A549 (cell line): ENCODE measurements at regions of chr15 and their contacts with region 1.

Region 1: DNA sequence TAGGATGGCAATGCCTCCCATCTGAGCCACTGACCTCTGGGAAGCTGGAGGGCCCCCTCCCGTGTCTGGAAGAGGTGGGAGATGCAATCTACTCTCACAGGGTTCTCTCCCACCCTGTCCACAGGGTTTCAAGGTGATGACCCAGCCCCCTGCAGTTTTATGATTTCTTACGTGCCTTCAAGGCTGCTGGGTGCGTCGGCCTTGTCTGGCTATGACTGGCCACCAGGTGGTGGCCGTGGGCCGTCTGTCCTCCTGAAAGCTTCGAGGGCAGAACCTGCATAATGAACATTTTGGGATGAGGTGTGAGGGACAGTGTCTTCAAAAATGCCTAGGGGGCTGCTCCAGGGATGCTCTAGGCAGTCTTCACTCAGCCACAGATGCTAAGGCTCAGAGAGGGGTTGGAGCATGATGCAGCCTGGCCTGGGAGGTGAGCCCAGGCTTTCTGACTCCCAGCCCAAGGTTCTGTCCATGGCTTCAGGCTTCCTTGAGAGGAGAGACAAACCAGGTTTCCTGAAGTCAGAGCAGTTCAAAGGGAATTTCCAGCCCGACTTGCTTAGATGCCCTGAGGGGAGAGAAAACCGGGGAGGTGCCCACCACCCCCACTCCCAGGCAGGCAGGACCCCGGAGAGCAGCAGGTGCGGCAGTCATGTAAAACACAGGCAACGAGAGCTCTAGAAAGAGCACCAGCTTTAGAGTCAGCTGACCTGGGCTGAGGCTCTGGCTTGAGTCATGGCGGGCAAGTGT is 18.7 kb downstream of the ISG20 start:
- DNase-seq: peak; percentile 62 to 78
- ATAC-seq: peak; percentile 75 to 88
- H3K4me3 ChIP-seq: no peak overlapping the region
- H3K27ac ChIP-seq: no peak overlapping the region
- H3K4me1 ChIP-seq: no peaks in the 10 kb centered on the region
- CTCF ChIP-seq: peak; percentile 93
- EP300 ChIP-seq: no peak
- POLR2A ChIP-seq: no peak
- RAD21 ChIP-seq: peak; percentile 94 to 97

Region 2: DNA sequence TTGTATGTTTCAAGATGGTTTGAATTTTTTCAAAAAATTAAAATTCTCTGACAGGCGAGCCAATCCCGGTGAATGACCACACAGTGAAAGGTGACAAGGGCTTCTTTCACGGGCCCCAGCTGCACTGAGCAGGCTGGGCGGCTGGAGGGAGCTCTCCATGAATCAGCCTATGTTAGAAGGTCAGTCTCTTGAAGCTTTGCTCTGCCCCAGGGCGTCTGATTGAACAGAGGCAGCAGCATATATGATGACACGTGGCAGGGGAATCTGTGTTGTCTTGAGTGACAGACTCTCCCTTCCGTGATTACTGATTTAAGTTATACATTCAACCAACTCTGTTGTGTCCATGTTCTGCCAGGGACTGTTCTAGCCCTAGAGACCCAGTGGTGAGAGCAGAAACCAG is 32.8 kb after region 1 on chr15:
- CTCF ChIA-PET with region 1: interaction called, 21 read pairs
- POLR2A ChIA-PET with region 1: no interaction called
- DNase-seq: no peak
- ATAC-seq: peak in 1 of 2 experiments; percentile 46; a peak in 3 of 6 replicates
- H3K4me3 ChIP-seq: no peak overlapping the region
- H3K27ac ChIP-seq: no peak overlapping the region
- H3K4me1 ChIP-seq: no peaks in the 10 kb centered on the region
- CTCF ChIP-seq: no peak
- EP300 ChIP-seq: no peak
- POLR2A ChIP-seq: no peak
- RAD21 ChIP-seq: no peak

Region 3: GRCh38 chr15:88756921-88757320 is 99.4 kb after region 1 on chr15:
- CTCF ChIA-PET with region 1: interaction called, 10 read pairs
- POLR2A ChIA-PET with region 1: no interaction called
- DNase-seq: no peak
- ATAC-seq: no peak
- H3K4me3 ChIP-seq: no peak overlapping the region
- H3K27ac ChIP-seq: no peak overlapping the region
- H3K4me1 ChIP-seq: no peaks in the 10 kb centered on the region
- CTCF ChIP-seq: no peak
- EP300 ChIP-seq: no peak
- POLR2A ChIP-seq: no peak
- RAD21 ChIP-seq: no peak

Region 4: DNA sequence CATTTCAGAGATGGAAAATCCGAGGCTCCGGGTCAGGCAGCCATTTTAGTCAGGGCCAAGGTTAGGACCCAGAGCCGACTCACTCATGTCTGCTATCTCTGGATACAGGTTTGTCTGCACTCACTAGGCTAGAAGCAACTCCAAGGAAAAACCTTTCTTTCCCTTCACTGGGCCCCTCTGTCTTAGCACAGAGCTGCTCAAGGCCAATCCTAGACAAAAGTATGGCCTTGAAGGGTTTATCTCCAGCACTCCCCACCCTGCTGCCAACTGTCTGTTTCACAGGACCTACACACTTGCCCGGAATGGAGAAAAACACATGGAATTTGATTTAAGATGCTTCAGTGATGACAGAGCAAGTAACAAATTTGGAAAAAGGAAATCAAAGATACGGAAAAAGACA is 171.3 kb after region 1 on chr15:
- CTCF ChIA-PET with region 1: interaction called, 297 read pairs
- POLR2A ChIA-PET with region 1: interaction called, 5 read pairs
- DNase-seq: no peak
- ATAC-seq: no peak
- H3K4me3 ChIP-seq: no peak overlapping the region
- H3K27ac ChIP-seq: no peak overlapping the region
- H3K4me1 ChIP-seq: no peaks in the 10 kb centered on the region
- CTCF ChIP-seq: no peak
- EP300 ChIP-seq: no peak
- POLR2A ChIP-seq: no peak
- RAD21 ChIP-seq: no peak

Region 5: GRCh38 chr15:88849376-88850072 is 192.0 kb after region 1 on chr15:
- CTCF ChIA-PET with region 1: interaction called, 15 read pairs
- POLR2A ChIA-PET with region 1: no interaction called
- DNase-seq: no peak
- ATAC-seq: no peak
- H3K4me3 ChIP-seq: no peak overlapping the region
- H3K27ac ChIP-seq: no peak overlapping the region
- H3K4me1 ChIP-seq: no peaks in the 10 kb centered on the region
- CTCF ChIP-seq: no peak
- EP300 ChIP-seq: no peak
- POLR2A ChIP-seq: no peak
- RAD21 ChIP-seq: no peak

Region 6: GRCh38 chr15:88872106-88872505 is 214.6 kb after region 1 on chr15:
- CTCF ChIA-PET with region 1: interaction called, 35 read pairs
- POLR2A ChIA-PET with region 1: no interaction called
- DNase-seq: no peak
- ATAC-seq: no peak; a peak in 1 of 6 replicates
- H3K4me3 ChIP-seq: no peak overlapping the region
- H3K27ac ChIP-seq: no peak overlapping the region
- H3K4me1 ChIP-seq: no peaks in the 10 kb centered on the region
- CTCF ChIP-seq: no peak
- EP300 ChIP-seq: no peak
- POLR2A ChIP-seq: no peak
- RAD21 ChIP-seq: no peak

Region 7: GRCh38 chr15:88897456-88898194 is 240.1 kb after region 1 on chr15:
- CTCF ChIA-PET with region 1: interaction called, 44 read pairs
- POLR2A ChIA-PET with region 1: interaction called, 3 read pairs
- DNase-seq: peak; percentile 80 to 88
- ATAC-seq: peak; percentile 66 to 81
- H3K4me3 ChIP-seq: no peak overlapping the region
- H3K27ac ChIP-seq: peak overlapping the region; percentile 35 to 62; a peak in 5 of 6 replicates
- H3K4me1 ChIP-seq: peaks cover 32% of the 10 kb centered on the region
- CTCF ChIP-seq: peak; percentile 47
- EP300 ChIP-seq: no peak
- POLR2A ChIP-seq: no peak
- RAD21 ChIP-seq: peak; percentile 37; a peak in 3 of 5 replicates